ENCODE measurements at regions of chr11 and their contacts with region 1.

Region 1: GRCh38 chr11:2342981-2343380 is 34.1 kb upstream of the CD81 start:
- DNase-seq: no peak
- H3K4me3 ChIP-seq: no peak overlapping the region
- CTCF ChIP-seq: no peak

Region 2: GRCh38 chr11:2269601-2270321 is 73.2 kb before region 1 on chr11:
- in situ Hi-C with region 1: loop called (anchors 5 kb)
- DNase-seq: no peak
- H3K4me3 ChIP-seq: no peak overlapping the region
- CTCF ChIP-seq: no peak

Measured in astrocyte of the cerebellum (primary cell).